ENCODE measurements at regions of chr6 and their contacts with region 1.

Region 1: GRCh38 chr6:134123666-134124208 is 71.3 kb upstream of the SLC2A12 start:
- DNase-seq: no peak
- H3K4me3 Mint-ChIP-seq: no peak overlapping the region
- H3K27ac Mint-ChIP-seq: no peak overlapping the region
- H3K4me1 Mint-ChIP-seq: no peaks in the 10 kb centered on the region
- H3K27me3 Mint-ChIP-seq: no peaks in the 10 kb centered on the region

Region 2: GRCh38 chr6:134111062-134111677 is 12.6 kb before region 1 on chr6:
- CTCF ChIA-PET with region 1: interaction called, 52 read pairs
- POLR2A ChIA-PET with region 1: no interaction called
- intact Hi-C with region 1: no loop called
- DNase-seq: peak; percentile 50
- H3K4me3 Mint-ChIP-seq: no peak overlapping the region
- H3K27ac Mint-ChIP-seq: no peak overlapping the region
- H3K4me1 Mint-ChIP-seq: no peaks in the 10 kb centered on the region
- H3K27me3 Mint-ChIP-seq: peaks cover 8% of the 10 kb centered on the region

Region 3: GRCh38 chr6:134161036-134161435 is 37.3 kb after region 1 on chr6:
- CTCF ChIA-PET with region 1: interaction called, 15 read pairs
- POLR2A ChIA-PET with region 1: no interaction called
- intact Hi-C with region 1: no loop called
- DNase-seq: no peak
- H3K4me3 Mint-ChIP-seq: no peak overlapping the region
- H3K27ac Mint-ChIP-seq: no peak overlapping the region
- H3K4me1 Mint-ChIP-seq: peaks cover 4% of the 10 kb centered on the region
- H3K27me3 Mint-ChIP-seq: no peaks in the 10 kb centered on the region